Activated CD8-positive, alpha-beta T cell treated with anti-CD3 and anti-CD28 coated beads, Interleukin-2, amount 10 ng/mL, durations not matched to agents 7 days and 5 days (primary cell): ENCODE measurements at regions of chr15 and their contacts with region 1.

Region 1: DNA sequence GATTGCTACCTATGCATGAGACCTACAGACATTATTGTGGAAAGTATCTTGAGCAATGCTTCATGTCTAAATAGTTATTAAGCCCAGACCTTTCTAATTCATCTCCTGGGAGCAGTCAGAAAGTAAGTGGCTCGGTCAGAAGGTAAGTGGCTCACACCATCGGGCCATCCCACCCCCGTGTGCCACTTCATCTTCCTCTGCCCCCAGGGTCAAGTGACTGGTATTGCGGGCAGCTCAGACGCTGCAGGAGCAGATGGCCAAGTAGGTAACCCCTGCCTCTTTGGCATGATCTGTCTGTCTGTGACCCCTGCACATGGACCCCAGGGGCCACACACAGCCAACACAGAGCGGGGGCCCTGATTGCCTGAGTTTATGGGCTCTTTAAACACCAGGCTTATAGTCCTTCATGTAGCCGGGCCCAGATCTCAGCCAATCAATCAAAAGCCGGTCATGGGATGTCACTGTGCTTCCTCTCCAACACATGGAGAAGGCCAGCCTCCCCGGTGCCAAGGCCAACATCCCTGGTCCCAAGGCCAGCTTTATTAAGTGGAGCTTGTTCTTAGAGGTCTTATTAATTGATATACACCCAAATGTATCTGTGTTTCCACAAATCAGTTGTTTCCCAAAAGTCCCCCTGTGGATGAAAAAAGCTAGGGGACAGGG is 42.9 kb downstream of the LARP6 start:
- DNase-seq: no peak
- ATAC-seq: no peak
- H3K4me3 Mint-ChIP-seq: no peak overlapping the region
- H3K27ac Mint-ChIP-seq: no peak overlapping the region
- H3K4me1 Mint-ChIP-seq: peaks cover 5% of the 10 kb centered on the region
- H3K27me3 Mint-ChIP-seq: peaks cover 6% of the 10 kb centered on the region

Region 2: DNA sequence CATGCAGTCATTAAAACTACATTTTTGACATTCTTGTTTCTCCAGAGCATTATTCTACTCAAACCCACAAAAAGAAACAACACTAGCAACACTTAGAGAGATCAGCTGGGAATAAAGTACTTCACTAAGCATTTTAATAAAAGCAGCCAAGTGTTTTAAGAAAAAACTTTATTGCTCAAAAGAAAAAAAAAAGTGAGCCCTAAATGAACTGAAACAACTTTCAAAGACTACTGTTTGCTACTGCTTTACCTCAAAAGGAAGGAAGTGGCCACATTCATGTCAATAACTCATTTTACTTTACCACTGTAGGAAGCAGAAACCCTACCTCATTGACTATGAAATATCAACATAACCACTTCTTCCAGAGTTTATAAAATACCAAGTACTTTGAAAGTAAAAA is 139.0 kb before region 1 on chr15:
- CTCF ChIA-PET with region 1: interaction called, 53 read pairs
- POLR2A ChIA-PET with region 1: no interaction called
- DNase-seq: peak; percentile 45
- ATAC-seq: peak; percentile 94
- H3K4me3 Mint-ChIP-seq: peak overlapping the region; percentile 68
- H3K27ac Mint-ChIP-seq: peak overlapping the region; percentile 82
- H3K4me1 Mint-ChIP-seq: peaks cover 29% of the 10 kb centered on the region
- H3K27me3 Mint-ChIP-seq: peaks cover 5% of the 10 kb centered on the region

Region 3: GRCh38 chr15:70679919-70680231 is 131.2 kb before region 1 on chr15:
- CTCF ChIA-PET with region 1: interaction called, 53 read pairs
- POLR2A ChIA-PET with region 1: no interaction called
- DNase-seq: no peak
- ATAC-seq: no peak
- H3K4me3 Mint-ChIP-seq: no peak overlapping the region
- H3K27ac Mint-ChIP-seq: no peak overlapping the region
- H3K4me1 Mint-ChIP-seq: peaks cover 8% of the 10 kb centered on the region
- H3K27me3 Mint-ChIP-seq: peaks cover 36% of the 10 kb centered on the region

Region 4: DNA sequence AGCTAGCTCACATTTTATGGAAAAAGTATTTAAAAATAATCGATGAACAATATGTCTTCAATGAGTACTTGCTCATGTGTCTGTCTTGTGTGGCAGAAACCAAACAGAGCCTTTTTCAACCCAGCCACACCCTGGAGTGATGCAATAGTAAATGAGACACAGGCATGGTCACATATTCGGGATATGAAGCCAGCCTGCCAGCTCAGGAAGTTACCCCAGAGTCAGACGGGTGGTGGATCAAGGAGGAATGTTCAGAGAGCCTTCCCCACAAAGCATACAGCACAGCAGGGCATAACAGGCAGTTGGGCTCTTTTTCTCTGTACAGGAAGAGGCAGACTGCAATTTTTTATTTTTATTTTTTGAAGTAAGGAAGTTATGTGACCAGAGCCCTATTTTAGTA is 15.6 kb after region 1 on chr15:
- CTCF ChIA-PET with region 1: interaction called, 12 read pairs
- POLR2A ChIA-PET with region 1: no interaction called
- DNase-seq: no peak
- ATAC-seq: no peak
- H3K4me3 Mint-ChIP-seq: no peak overlapping the region
- H3K27ac Mint-ChIP-seq: no peak overlapping the region
- H3K4me1 Mint-ChIP-seq: peaks cover 3% of the 10 kb centered on the region
- H3K27me3 Mint-ChIP-seq: peaks cover 6% of the 10 kb centered on the region